ENCODE measurements at regions of chr20 and their contacts with region 1.

Region 1: DNA sequence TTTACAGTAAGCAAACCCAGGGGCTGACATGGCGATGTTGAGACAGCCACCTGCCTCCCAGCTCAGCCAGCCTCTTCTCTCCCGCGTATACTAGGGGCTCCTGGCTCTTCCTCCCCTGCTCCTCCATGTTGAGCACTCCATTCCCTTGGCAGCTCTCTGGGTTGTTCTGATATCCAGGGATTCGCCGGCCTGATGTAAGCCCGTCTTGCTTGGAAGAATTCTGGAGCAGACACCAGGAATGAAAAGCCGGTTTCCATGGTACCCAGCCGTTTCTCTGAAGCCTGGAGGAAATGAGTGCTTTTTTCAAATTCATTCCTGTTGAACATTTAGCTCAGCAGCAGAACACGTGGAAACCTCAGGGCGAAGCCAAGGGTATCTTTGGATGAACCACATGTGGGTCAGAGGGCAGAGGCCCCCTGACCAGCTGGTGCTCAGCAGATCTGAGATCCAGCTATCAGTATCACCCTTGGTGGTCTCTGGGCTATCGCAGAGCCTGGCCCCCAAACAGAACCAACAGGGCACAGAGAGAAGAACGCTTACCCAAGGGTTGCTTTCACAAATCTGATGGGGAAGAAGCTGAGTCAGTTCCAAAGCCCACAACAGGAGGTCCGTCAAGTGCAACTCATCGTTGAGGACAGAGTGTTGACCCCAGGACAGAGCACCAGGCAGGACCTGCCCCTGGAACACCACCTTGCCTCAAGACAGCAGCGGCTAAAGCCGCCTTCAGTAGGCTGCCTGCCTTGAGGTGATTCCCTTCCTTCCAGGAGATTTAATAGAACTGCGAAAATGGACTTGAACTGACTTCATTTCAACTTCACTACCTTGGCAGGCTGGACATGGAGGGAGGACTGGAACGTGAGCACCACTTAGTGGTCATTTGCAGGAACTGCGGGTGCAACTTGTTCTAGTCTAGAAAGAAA is 96.1 kb upstream of the RIN2 start:
- DNase-seq: peak; percentile 56 to 63
- H3K4me3 ChIP-seq: peak overlapping the region in 1 of 3 donors; percentile 20
- H3K27ac ChIP-seq: no peak overlapping the region
- H3K4me1 ChIP-seq: no peaks in the 10 kb centered on the region
- H3K27me3 ChIP-seq: no peaks in the 10 kb centered on the region
- CTCF ChIP-seq: peak; percentile 96 to 97 (median 96)
- POLR2A ChIP-seq: no peak

Region 2: GRCh38 chr20:19205977-19206396 is 456.0 kb before region 1 on chr20:
- intact Hi-C with region 1: loop called (anchors 5 kb)
- DNase-seq: peak; percentile 59 to 80
- H3K4me3 ChIP-seq: no peak overlapping the region
- H3K27ac ChIP-seq: no peak overlapping the region
- H3K4me1 ChIP-seq: peaks cover 0 to 3% of the 10 kb centered on the region in 2 donors
- H3K27me3 ChIP-seq: no peaks in the 10 kb centered on the region
- CTCF ChIP-seq: peak; percentile 80 to 86 (median 85)
- POLR2A ChIP-seq: no peak